CD14-positive monocyte (primary cell): ENCODE measurements at regions of chr7 and their contacts with region 1.

Region 1: DNA sequence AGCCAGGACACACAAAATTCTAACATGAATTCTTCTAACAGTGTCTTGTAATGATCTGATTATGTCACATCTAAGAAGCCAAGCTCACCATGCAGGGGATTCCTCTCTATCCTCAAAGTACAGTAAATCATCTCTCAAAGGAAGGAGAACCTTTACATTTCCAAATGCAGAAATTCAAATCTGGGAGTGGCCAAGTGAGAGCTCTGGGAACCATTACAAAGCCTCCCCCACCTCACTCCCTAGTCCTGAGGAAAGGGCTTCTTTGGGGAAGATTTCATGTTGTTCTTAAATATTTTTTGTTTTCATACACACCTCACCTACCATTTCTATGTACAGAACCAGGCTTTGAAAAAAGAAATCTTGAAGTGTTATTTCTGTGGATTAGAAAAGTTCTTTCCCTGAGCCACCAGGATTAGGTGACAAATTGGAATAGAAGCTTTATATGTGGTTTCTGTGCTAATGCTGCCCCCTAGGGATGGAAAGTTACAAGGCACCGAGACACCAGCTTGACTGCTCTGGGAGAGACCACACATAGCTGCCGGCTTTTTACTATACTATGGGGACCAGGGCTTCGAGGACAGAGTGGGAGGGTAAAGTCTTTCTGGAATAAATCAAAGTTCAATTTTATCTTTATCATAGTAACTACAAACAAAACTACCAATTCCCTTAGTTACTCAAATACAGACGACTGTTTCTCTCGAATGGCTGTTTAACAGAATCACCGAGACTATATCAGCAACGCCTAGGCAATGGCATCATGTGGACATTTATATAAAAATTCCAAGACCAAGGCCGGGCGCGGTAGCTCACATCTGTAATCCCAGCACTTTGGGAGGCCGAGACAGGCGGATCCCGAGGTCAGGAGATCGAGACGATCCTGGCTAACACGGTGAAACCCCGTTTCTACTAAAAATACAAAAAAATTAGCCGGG is 116.1 kb downstream of the RNF216 start:
- DNase-seq: peak; percentile 60 to 72 (median 66)
- H3K4me3 ChIP-seq: no peak overlapping the region
- H3K4me3 Mint-ChIP-seq: no peak overlapping the region
- H3K27ac ChIP-seq: no peak overlapping the region
- H3K27ac Mint-ChIP-seq: peak overlapping the region in 2 of 7 donors; percentile 50 to 66
- H3K4me1 ChIP-seq: peaks cover 45 to 67% of the 10 kb centered on the region in 2 donors
- H3K4me1 Mint-ChIP-seq: peaks cover 62% of the 10 kb centered on the region
- H3K27me3 ChIP-seq: no peaks in the 10 kb centered on the region
- H3K27me3 Mint-ChIP-seq: peaks cover 0 to 8% (median 0%) of the 10 kb centered on the region in 3 donors
- CTCF ChIP-seq: peak; percentile 81

Region 2: GRCh38 chr7:5653661-5654060 is 11.7 kb before region 1 on chr7:
- intact Hi-C with region 1: no loop called
- DNase-seq: no peak
- H3K4me3 ChIP-seq: no peak overlapping the region
- H3K4me3 Mint-ChIP-seq: no peak overlapping the region
- H3K27ac ChIP-seq: peak overlapping the region in 1 of 2 donors; percentile 23
- H3K27ac Mint-ChIP-seq: peak overlapping the region in 1 of 7 donors; percentile 14
- H3K4me1 ChIP-seq: no peaks in the 10 kb centered on the region
- H3K4me1 Mint-ChIP-seq: no peaks in the 10 kb centered on the region
- H3K27me3 ChIP-seq: no peaks in the 10 kb centered on the region
- H3K27me3 Mint-ChIP-seq: peaks cover 0 to 1% (median 0%) of the 10 kb centered on the region in 3 donors
- CTCF ChIP-seq: no peak

Region 3: GRCh38 chr7:5704534-5704922 is 39.2 kb after region 1 on chr7:
- intact Hi-C with region 1: loop called (anchors 5 kb)
- DNase-seq: peak; percentile 80 to 88 (median 86)
- H3K4me3 ChIP-seq: no peak overlapping the region
- H3K4me3 Mint-ChIP-seq: no peak overlapping the region
- H3K27ac ChIP-seq: peak overlapping the region in 1 of 2 donors; percentile 89
- H3K27ac Mint-ChIP-seq: peak overlapping the region in 3 of 7 donors; percentile 51 to 81 (median 55)
- H3K4me1 ChIP-seq: peaks cover 34 to 47% of the 10 kb centered on the region in 2 donors
- H3K4me1 Mint-ChIP-seq: peaks cover 38% of the 10 kb centered on the region
- H3K27me3 ChIP-seq: no peaks in the 10 kb centered on the region
- H3K27me3 Mint-ChIP-seq: no peaks in the 10 kb centered on the region
- CTCF ChIP-seq: peak; percentile 92